ENCODE measurements at regions of chr17 and their contacts with region 1.

Region 1: DNA sequence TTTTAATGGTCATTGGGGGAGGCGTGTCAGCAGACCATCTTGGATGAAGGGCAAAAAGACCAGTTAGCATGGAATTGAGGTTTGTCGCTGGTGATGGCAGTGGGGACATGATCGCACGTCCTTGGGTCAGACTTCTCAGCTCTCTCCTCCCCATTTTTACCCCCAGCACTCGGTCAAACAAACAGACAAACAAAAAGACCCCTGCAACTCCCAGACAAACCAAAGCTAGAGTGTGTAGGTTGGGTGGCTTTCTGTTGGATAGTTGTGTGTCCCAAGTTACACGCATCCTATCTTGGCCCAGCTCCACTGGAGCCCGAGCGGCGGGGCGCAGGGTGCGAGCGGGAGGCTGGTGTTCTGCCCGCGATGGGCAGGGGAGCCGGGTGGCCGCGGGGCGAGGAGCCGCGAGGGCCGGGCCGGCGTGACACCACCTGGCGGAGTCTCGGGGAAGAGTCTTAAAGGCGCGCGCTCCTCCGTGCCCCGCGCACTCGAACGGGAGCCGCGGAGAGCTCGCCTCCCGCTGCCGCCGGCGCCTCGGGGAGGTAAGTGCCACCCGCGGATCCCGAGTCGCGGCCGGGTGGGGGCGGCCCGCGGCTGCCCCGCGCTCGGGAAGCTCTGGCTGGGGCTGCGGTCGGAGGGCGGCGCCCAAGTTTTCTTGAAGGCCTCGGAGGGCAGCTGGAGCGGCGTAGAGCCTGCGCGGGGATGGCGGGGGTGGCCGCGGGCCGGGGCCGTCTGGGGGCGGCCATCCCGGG is 18.5 kb upstream of the NTN1 start:
- DNase-seq: no peak
- H3K4me3 ChIP-seq: peak overlapping the region; percentile 36
- H3K27ac ChIP-seq: no peak overlapping the region
- H3K4me1 ChIP-seq: no peaks in the 10 kb centered on the region
- H3K27me3 ChIP-seq: no peaks in the 10 kb centered on the region
- CTCF ChIP-seq: no peak
- EP300 ChIP-seq: no peak
- POLR2A ChIP-seq: no peak

Region 2: DNA sequence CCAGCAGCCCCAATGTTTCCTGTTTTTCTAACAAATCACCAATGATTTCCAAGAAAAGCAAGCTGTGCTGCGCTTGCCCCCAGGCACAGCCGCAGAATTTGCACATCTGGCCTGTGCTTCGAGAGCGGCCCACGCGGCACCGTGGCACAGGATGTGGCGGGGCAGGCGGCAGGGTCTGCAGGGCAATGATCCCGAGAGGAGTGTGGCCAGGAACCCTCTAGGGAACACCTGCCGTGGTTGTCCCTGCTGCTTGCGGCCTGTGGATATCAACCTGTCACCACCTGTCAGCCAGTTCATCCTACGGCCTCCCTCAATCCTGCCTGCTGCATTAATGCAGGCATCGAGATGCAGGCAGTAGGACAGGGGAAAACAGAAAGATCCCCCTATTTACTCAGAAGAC is 61.3 kb before region 1 on chr17:
- intact Hi-C with region 1: loop called in 1 of 4 experiments (anchors 10 kb)
- DNase-seq: no peak
- H3K4me3 ChIP-seq: no peak overlapping the region
- H3K27ac ChIP-seq: no peak overlapping the region
- H3K4me1 ChIP-seq: no peaks in the 10 kb centered on the region
- H3K27me3 ChIP-seq: no peaks in the 10 kb centered on the region
- CTCF ChIP-seq: no peak
- EP300 ChIP-seq: no peak
- POLR2A ChIP-seq: no peak

Region 3: GRCh38 chr17:9228408-9229151 is 225.8 kb after region 1 on chr17:
- intact Hi-C with region 1: no loop called
- DNase-seq: no peak
- H3K4me3 ChIP-seq: peak overlapping the region; percentile 2
- H3K27ac ChIP-seq: no peak overlapping the region
- H3K4me1 ChIP-seq: no peaks in the 10 kb centered on the region
- H3K27me3 ChIP-seq: no peaks in the 10 kb centered on the region
- CTCF ChIP-seq: no peak
- EP300 ChIP-seq: no peak
- POLR2A ChIP-seq: no peak